ENCODE measurements at regions of chr6 and their contacts with region 1.

Region 1: DNA sequence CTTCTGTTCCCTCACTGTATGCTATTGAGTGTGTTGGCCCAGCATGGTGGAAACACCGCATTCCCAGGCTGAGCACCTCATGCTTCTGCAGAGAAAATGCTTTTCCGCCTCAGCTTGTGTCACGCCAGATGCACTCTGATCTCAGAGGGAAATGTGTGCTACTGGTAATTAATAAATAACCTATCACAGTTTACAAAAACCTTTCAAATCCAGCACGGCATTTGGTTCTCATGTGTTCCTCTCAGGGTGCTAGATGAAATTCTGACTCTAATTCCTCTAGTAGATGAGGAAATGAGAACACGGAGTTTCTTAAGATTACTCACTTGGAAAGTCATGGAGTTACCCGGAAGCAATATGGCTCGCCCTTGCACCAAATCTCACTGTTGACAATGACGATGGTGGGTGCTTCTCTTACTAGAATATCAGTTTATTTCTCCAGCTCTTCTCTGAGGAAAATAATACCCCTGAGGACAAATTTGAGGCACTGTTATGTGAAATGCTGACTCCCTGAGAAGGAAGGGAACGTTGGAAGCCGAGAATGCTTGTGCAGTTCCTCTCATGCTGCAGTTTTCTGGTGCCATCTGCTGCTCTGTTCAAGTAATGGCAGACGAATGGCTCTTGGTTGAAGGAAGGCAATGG is 116.6 kb downstream of the RNF144B start:
- DNase-seq: peak in 1 of 2 donors; percentile 69
- ATAC-seq: peak in 2 of 3 donors; percentile 56 to 71
- H3K4me3 ChIP-seq: no peak overlapping the region
- H3K4me3 Mint-ChIP-seq: no peak overlapping the region
- H3K27ac ChIP-seq: no peak overlapping the region
- H3K27ac Mint-ChIP-seq: no peak overlapping the region
- H3K4me1 ChIP-seq: peaks cover 3% of the 10 kb centered on the region
- H3K4me1 Mint-ChIP-seq: no peaks in the 10 kb centered on the region
- H3K27me3 ChIP-seq: no peaks in the 10 kb centered on the region
- H3K27me3 Mint-ChIP-seq: no peaks in the 10 kb centered on the region
- CTCF ChIP-seq: peak; percentile 66

Region 2: DNA sequence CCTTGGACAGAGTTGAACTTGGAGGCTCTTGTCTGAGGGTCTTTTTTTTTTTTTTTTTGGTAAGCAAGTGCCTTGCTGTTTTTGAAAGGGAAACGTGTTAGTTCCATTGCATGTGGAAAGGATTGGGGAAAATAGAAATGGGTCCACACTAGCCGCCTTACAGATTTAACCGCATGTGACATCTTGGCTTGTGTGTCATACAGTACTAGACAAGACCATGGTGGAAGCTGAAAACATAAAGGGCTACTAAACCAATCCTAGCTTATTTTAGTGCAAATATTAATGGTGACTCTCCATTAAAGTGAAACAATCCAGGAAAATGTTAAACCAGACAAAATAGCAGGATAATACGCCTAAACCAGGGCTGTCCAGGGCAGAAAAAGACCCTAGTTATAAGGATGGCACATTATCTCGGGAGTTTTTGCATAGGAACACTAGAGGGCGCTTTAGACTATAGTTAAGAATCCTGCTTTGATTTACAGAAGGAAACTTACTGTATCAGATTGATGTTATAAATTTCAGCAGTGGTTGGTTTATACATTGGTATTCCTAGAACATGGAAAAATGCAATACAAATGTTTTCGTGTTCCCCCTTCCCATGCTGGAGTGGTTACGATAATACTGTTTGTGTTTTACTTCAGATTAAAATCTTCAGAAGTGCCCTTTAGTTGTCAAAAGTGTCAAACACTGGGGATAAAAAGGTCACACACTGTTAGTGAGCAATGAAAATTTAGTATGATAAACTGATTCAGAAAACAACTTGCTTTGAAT is 179.6 kb before region 1 on chr6:
- intact Hi-C with region 1: loop called (anchors 1 kb)
- DNase-seq: peak in 1 of 2 donors; percentile 66
- ATAC-seq: peak in 2 of 3 donors; percentile 68 to 76
- H3K4me3 ChIP-seq: no peak overlapping the region
- H3K4me3 Mint-ChIP-seq: no peak overlapping the region
- H3K27ac ChIP-seq: no peak overlapping the region
- H3K27ac Mint-ChIP-seq: no peak overlapping the region
- H3K4me1 ChIP-seq: no peaks in the 10 kb centered on the region
- H3K4me1 Mint-ChIP-seq: no peaks in the 10 kb centered on the region
- H3K27me3 ChIP-seq: no peaks in the 10 kb centered on the region
- H3K27me3 Mint-ChIP-seq: peaks cover 0 to 8% of the 10 kb centered on the region in 2 donors
- CTCF ChIP-seq: peak; percentile 90

Region 3: GRCh38 chr6:18477301-18477941 is 26.3 kb before region 1 on chr6:
- intact Hi-C with region 1: no loop called
- DNase-seq: no peak
- ATAC-seq: no peak
- H3K4me3 ChIP-seq: no peak overlapping the region
- H3K4me3 Mint-ChIP-seq: no peak overlapping the region
- H3K27ac ChIP-seq: no peak overlapping the region
- H3K27ac Mint-ChIP-seq: no peak overlapping the region
- H3K4me1 ChIP-seq: no peaks in the 10 kb centered on the region
- H3K4me1 Mint-ChIP-seq: no peaks in the 10 kb centered on the region
- H3K27me3 ChIP-seq: no peaks in the 10 kb centered on the region
- H3K27me3 Mint-ChIP-seq: peaks cover 9 to 14% of the 10 kb centered on the region in 2 donors
- CTCF ChIP-seq: no peak

Measured in natural killer cell (primary cell).